ENCODE measurements at regions of chr19 and their contacts with region 1.

Region 1: GRCh38 chr19:40633207-40633606 is 32.0 kb downstream of the LTBP4 start:
- DNase-seq: no peak
- H3K4me3 ChIP-seq: no peak overlapping the region
- H3K4me3 Mint-ChIP-seq: peak overlapping the region; percentile 65
- H3K27ac Mint-ChIP-seq: no peak overlapping the region
- H3K4me1 ChIP-seq: peaks cover 5% of the 10 kb centered on the region
- H3K4me1 Mint-ChIP-seq: peaks cover 7% of the 10 kb centered on the region
- H3K27me3 ChIP-seq: peaks cover 2% of the 10 kb centered on the region; the same call in 1 of the 2 replicates
- H3K27me3 Mint-ChIP-seq: peaks cover 2% of the 10 kb centered on the region
- CTCF ChIP-seq: no peak

Region 2: GRCh38 chr19:40542202-40542859 is 90.9 kb before region 1 on chr19:
- CTCF ChIA-PET with region 1: interaction called, 8 read pairs
- POLR2A ChIA-PET with region 1: no interaction called
- intact Hi-C with region 1: loop called (anchors 1 kb)
- DNase-seq: no peak
- H3K4me3 ChIP-seq: no peak overlapping the region
- H3K4me3 Mint-ChIP-seq: no peak overlapping the region
- H3K27ac Mint-ChIP-seq: no peak overlapping the region
- H3K4me1 ChIP-seq: no peaks in the 10 kb centered on the region
- H3K4me1 Mint-ChIP-seq: no peaks in the 10 kb centered on the region
- H3K27me3 ChIP-seq: no peaks in the 10 kb centered on the region
- H3K27me3 Mint-ChIP-seq: peaks cover 2% of the 10 kb centered on the region
- CTCF ChIP-seq: no peak

Region 3: DNA sequence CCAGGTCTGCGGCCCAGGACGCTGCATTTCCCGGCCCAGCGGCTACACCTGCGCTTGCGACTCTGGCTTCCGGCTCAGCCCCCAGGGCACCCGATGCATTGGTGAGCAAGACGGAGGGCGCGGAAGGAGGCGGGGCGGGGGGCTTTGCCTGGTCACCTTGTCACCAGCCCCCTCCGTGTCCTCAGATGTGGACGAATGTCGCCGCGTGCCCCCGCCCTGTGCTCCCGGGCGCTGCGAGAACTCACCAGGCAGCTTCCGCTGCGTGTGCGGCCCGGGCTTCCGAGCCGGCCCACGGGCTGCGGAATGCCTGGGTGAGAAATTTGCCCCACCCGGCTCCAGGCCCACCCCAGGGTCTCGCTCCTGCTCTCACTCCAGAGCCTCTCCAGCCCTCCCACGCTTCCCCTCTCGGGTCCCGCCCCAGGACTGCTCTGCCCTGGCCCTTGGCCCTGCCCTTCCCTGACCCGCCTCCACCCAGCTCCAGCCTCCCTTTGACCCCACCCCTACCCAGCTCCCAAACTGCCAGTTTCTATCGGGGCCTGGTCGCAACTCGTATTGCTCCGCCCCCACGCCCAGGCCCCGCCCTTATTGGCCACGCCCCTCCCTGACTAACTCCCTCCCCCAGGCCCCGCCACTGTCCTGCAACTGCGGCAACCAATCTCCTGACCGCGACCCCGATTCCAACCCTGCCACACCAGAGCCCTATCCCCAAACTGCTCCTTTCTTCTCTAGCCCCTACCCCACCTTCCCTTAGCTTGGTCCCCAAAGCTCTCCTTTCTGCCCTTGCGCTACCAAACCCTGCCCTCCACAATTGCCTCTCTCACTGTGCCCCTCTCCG is 23.4 kb before region 1 on chr19:
- CTCF ChIA-PET with region 1: interaction called, 45 read pairs
- POLR2A ChIA-PET with region 1: interaction called, 3 read pairs
- intact Hi-C with region 1: loop called (anchors 1 kb)
- DNase-seq: peak; percentile 94 to 97
- H3K4me3 ChIP-seq: peak overlapping the region; percentile 62
- H3K4me3 Mint-ChIP-seq: peak overlapping the region; percentile 77
- H3K27ac Mint-ChIP-seq: no peak overlapping the region
- H3K4me1 ChIP-seq: peaks cover 38% of the 10 kb centered on the region
- H3K4me1 Mint-ChIP-seq: peaks cover 38% of the 10 kb centered on the region
- H3K27me3 ChIP-seq: no peaks in the 10 kb centered on the region
- H3K27me3 Mint-ChIP-seq: no peaks in the 10 kb centered on the region
- CTCF ChIP-seq: no peak

Region 4: GRCh38 chr19:40650749-40651305 is 17.6 kb after region 1 on chr19:
- CTCF ChIA-PET with region 1: interaction called, 20 read pairs
- POLR2A ChIA-PET with region 1: no interaction called
- intact Hi-C with region 1: no loop called
- DNase-seq: no peak
- H3K4me3 ChIP-seq: no peak overlapping the region
- H3K4me3 Mint-ChIP-seq: peak overlapping the region; percentile 29
- H3K27ac Mint-ChIP-seq: no peak overlapping the region
- H3K4me1 ChIP-seq: 0 out of 2 replicates have a peak, but pooled peaks cover under 1% of the 10 kb centered on the region
- H3K4me1 Mint-ChIP-seq: peaks cover 7% of the 10 kb centered on the region
- H3K27me3 ChIP-seq: no peaks in the 10 kb centered on the region
- H3K27me3 Mint-ChIP-seq: no peaks in the 10 kb centered on the region
- CTCF ChIP-seq: no peak